ENCODE measurements at regions of chr12 and their contacts with region 1.

Region 1: DNA sequence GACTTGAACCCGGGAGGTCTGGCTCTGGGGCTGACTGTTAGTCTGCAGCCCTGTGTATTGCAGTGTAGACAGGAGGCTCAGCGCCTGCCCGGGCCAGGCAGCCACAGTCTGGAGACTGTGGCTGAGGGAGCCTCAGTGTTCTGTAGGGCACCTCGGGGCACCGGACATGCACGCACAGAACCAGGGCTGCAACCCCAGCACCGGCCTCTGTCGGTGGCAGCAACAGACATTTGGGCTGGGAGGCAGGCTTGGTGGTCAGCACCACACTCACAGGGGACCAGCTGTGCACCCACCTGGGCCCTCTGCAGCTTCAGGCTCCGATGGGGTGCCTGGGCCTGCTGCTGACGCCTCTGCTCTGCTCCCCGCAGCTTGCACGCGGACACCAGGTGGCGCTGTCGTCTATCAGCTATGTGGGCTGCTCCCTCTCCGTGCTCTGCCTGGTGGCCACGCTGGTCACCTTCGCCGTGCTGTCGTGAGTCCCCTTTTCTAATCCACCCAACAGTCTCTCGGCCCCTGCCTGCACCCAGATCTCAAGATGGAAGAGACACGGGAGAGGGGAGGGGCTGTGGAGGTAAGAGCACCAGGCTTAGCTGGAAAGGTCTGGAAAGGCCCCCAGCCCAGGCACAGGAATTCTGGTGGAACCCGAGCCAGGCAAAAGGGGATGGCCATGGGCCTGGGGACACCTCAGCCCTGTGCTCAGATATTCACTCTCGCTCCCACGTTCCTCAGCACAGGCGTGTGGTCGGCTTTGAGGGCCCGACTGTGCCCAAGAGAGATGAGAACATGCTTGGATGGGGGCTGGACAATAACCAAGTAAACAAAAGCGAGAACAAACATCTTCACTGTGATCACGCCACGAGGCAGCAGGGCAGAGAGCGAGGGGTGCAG is 151.0 kb downstream of the ADGRD1 start:
- DNase-seq: peak; percentile 85 to 89
- H3K4me3 ChIP-seq: no peak overlapping the region
- H3K27ac ChIP-seq: no peak overlapping the region
- H3K4me1 ChIP-seq: peaks cover 0 to 6% of the 10 kb centered on the region in 2 donors
- H3K27me3 ChIP-seq: no peaks in the 10 kb centered on the region
- CTCF ChIP-seq: peak; percentile 79 to 98 (median 94)
- POLR2A ChIP-seq: no peak

Region 2: DNA sequence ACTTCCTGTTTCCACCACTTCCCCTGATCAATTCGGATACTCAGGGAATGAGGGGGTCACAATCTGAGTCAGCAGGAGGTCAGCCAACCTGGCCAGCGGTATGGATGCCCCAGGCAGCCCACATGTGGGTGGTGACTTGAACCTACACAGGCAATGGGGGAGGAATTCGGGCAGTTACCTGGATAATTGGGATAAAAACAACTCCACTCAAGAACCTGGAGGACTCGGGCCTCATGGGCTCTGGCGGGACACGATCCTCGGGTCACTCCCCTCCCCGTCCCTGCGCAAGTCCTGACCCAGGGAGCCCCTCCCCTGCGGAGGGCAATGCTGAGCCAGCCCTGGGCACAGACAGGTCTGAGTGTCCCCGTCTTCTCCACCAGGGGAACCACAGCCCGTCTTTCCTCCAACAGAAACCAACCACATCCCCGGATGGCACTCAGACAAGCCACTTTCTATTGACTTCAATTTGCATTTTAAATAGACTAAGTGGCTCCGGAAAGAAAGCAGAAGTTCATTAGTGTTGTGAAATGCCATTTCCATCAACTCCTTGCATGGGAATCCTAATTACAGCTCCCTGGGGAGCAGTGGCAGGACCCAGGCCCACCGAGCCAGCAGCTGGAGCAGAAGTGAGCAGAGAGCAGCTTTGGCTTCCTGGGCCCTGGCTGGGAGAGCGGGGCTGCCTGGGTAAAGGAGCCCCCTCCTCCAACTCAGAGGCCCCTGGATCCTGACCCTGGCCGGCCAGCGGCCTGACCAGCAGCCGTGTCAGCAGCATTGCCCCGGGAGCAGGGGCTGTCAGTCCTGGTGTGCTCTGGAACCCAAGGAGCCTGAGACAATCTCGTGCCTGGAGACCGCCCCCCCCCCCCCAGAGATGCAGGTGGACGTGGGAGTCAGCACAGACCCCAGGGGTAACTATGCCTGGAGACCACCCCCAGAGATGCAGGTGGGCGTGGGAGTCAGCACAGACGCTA is 223.1 kb after region 1 on chr12:
- intact Hi-C with region 1: no loop called
- DNase-seq: no peak
- H3K4me3 ChIP-seq: no peak overlapping the region
- H3K27ac ChIP-seq: no peak overlapping the region
- H3K4me1 ChIP-seq: no peaks in the 10 kb centered on the region
- H3K27me3 ChIP-seq: no peaks in the 10 kb centered on the region
- CTCF ChIP-seq: no peak
- POLR2A ChIP-seq: no peak

Region 3: DNA sequence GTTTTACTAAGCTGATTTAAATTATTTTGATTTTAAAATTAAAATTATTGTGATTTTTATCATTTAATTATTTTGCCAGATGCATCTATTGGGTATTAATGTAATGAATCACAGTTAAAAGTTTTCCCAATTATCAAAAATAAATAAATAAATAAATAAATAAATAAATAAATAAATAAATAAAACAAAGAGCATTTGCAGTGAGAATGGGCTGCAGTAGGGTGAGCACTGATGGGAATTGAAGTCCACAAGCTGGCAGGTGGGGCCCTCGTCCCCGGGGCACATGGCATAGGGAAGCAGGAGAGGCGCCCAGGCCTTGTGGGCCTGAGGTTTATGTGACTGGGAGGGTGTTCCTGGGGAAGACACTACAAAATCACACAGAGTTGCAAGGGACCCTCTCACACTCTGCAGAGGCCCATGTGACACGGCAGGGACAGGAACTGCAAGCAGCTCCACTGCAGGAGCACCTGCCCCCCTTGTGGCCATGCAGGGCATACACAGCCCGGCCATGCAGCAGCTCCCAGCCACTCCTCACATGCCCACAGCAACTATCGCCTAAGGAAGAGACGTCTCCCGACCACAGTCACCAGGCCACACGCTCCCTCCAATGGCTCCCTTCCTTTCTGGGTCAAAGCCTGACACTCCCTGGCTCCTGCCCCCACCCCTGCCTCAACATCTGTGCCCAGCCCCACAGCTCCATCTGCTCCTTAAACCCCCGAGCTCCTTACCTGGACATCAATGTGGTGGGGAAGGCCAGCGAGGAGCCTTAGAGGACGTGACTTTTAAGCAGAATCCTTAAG is 349.9 kb after region 1 on chr12:
- intact Hi-C with region 1: loop called (anchors 10 kb)
- DNase-seq: peak; percentile 55 to 63
- H3K4me3 ChIP-seq: no peak overlapping the region
- H3K27ac ChIP-seq: no peak overlapping the region
- H3K4me1 ChIP-seq: no peaks in the 10 kb centered on the region
- H3K27me3 ChIP-seq: no peaks in the 10 kb centered on the region
- CTCF ChIP-seq: peak; percentile 14 to 90 (median 58)
- POLR2A ChIP-seq: no peak

Measured in thyroid gland (tissue), 4 donors.